ENCODE measurements at regions of chr5 and their contacts with region 1.

Region 1: GRCh38 chr5:97534166-97534565 is 351.1 kb upstream of the RIOK2 start:
- DNase-seq: peak; percentile 85
- H3K4me3 ChIP-seq: no peak overlapping the region
- H3K27ac ChIP-seq: no peak overlapping the region
- H3K4me1 ChIP-seq: no peaks in the 10 kb centered on the region
- H3K27me3 ChIP-seq: no peaks in the 10 kb centered on the region
- CTCF ChIP-seq: peak; percentile 64 to 72

Region 2: DNA sequence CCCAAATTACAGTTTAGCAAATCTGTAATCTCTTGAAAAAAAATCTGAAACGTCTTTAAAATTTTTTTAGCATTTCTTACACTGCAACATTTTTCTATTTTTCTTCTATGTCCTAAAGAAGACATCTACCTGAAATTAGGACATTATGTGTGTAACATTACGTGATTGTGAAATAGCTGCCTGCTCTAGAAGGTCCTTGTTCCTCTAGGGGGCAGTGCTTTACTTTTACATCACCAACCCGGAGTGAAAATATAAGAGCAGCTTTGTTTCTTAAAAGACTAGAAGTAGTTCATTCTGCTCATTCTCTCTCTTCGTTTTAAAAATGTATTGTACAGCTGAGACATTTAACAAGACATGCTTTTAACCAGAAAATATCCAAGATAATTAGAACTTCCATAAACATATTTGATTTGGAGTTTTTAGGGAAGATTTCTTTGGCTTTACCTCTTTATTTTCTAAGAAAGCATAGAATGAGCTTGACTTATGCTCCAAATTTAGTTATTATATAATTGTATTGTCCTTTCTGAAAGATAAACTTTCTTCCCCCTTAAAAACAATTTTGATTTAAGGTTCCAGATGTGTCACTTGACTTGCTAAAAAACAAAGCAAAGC is 303.0 kb before region 1 on chr5:
- CTCF ChIA-PET with region 1: interaction called, 5 read pairs
- dilution Hi-C with region 1: no loop called
- in situ Hi-C with region 1: no loop called
- intact Hi-C with region 1: loop called (anchors 2 kb)
- DNase-seq: peak; percentile 58
- H3K4me3 ChIP-seq: no peak overlapping the region
- H3K27ac ChIP-seq: no peak overlapping the region
- H3K4me1 ChIP-seq: no peaks in the 10 kb centered on the region
- H3K27me3 ChIP-seq: no peaks in the 10 kb centered on the region
- CTCF ChIP-seq: peak; percentile 81 to 84

Region 3: GRCh38 chr5:97297063-97297703 is 237.0 kb before region 1 on chr5:
- CTCF ChIA-PET with region 1: no interaction called
- dilution Hi-C with region 1: no loop called
- in situ Hi-C with region 1: no loop called
- intact Hi-C with region 1: loop called (anchors 5 kb)
- DNase-seq: peak; percentile 6
- H3K4me3 ChIP-seq: no peak overlapping the region
- H3K27ac ChIP-seq: no peak overlapping the region
- H3K4me1 ChIP-seq: no peaks in the 10 kb centered on the region
- H3K27me3 ChIP-seq: no peaks in the 10 kb centered on the region
- CTCF ChIP-seq: peak; percentile 27 to 45

Region 4: DNA sequence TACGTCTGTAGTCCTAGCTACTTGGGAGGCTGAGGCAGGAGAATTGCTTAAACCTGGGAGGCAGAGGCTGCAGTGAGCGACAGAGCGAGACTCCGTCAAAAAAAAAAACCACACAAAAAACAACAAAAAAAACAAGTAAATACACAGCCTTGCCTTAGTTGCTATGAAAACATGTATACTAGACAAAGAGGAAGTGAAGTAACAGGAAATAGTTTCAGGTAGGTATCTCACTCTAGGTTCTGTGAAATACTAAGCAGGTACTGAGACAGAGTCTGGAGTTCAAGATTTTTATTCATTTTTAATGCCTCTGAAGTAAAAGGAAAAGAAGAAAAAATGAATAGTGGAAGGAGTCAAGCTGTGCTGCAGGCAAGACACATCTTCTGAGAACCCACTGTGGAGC is 551.4 kb after region 1 on chr5:
- CTCF ChIA-PET with region 1: no interaction called
- dilution Hi-C with region 1: no loop called
- in situ Hi-C with region 1: no loop called
- intact Hi-C with region 1: no loop called
- DNase-seq: no peak
- H3K4me3 ChIP-seq: no peak overlapping the region
- H3K27ac ChIP-seq: no peak overlapping the region
- H3K4me1 ChIP-seq: no peaks in the 10 kb centered on the region
- H3K27me3 ChIP-seq: no peaks in the 10 kb centered on the region
- CTCF ChIP-seq: no peak

Measured in mammary epithelial cell (primary cell).